ENCODE measurements at regions of chr7 and their contacts with region 1.

Region 1: DNA sequence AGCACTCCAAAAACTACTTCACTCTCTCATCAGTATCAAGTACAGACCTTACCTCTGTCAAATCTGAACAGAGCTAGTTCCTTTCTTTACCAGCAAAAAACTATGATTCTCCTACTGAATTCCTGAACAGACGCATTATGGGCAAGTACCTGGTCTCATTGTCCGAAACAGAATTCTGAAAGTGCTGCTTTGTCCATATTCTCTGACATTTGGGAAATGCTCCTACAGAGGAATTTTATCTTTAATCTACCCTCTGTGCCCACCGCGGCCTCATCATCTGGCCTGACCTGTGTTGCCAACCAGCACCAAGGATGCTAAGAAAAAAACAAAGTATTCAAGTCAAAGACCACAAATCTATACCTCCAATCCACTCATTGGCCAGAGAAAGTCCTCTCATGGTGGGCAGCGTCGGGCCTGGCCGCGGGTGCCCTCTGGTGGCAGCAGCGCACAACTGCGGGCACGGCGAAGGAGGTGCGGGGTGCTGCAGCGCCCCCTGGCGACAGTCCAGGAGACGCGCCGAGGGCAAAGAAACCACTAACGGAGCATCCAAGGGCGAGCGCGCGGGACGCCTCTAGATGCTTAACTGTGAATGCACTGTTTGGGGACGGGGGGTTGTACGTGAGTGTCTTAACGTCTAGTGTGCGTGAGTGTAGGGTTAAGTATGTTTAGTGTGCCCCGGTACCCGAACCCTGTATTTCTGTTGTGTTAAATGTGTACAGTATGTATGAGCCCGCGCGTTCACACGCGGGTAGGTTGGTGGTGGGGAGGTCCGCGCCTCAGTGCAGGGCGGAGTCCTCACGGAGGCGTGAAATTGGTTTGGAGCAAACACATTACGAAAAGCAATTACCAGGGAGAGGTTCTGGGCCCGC is 5.0 kb upstream of the GBX1 start:
- DNase-seq: peak; percentile 50
- ATAC-seq: peak; percentile 96
- H3K4me3 ChIP-seq: no peak overlapping the region
- H3K27ac ChIP-seq: no peak overlapping the region
- H3K4me1 ChIP-seq: no peaks in the 10 kb centered on the region
- H3K27me3 ChIP-seq: peaks cover 56% of the 10 kb centered on the region
- CTCF ChIP-seq: peak; percentile 100
- POLR2A ChIP-seq: no peak
- RAD21 ChIP-seq: peak; percentile 85

Region 2: GRCh38 chr7:150466477-150466876 is 706.0 kb before region 1 on chr7:
- CTCF ChIA-PET with region 1: no interaction called
- POLR2A ChIA-PET with region 1: no interaction called
- dilution Hi-C with region 1: no loop called
- in situ Hi-C with region 1: no loop called
- intact Hi-C with region 1: no loop called
- DNase-seq: no peak
- ATAC-seq: no peak
- H3K4me3 ChIP-seq: no peak overlapping the region
- H3K27ac ChIP-seq: no peak overlapping the region
- H3K4me1 ChIP-seq: no peaks in the 10 kb centered on the region
- H3K27me3 ChIP-seq: no peaks in the 10 kb centered on the region
- CTCF ChIP-seq: no peak
- POLR2A ChIP-seq: no peak
- RAD21 ChIP-seq: no peak

Region 3: DNA sequence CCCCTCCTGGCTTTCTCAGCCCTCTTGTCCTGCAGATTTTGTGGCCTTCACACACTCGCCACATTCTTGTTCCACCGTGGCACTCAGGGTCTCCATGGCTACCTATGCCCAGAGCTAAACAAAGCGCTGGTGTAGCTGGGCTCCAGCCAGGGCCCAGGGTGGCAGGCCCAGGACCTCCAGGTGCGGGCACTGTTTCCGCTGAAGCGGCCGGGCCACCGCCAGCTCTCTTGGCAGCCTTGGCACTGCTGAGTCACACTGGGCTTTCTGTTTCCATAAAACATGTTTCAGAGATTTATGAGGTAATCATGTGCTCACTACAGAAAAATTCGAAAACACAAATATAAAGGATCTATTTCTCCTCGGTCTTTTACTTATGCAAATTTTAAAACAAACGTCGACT is 268.9 kb before region 1 on chr7:
- CTCF ChIA-PET with region 1: no interaction called
- POLR2A ChIA-PET with region 1: no interaction called
- dilution Hi-C with region 1: no loop called
- in situ Hi-C with region 1: no loop called
- intact Hi-C with region 1: loop called (anchors 5 kb)
- DNase-seq: peak; percentile 81
- ATAC-seq: peak; percentile 74
- H3K4me3 ChIP-seq: no peak overlapping the region
- H3K27ac ChIP-seq: peak overlapping the region; percentile 22; the same call in 1 of the 2 replicates
- H3K4me1 ChIP-seq: peaks cover 13% of the 10 kb centered on the region
- H3K27me3 ChIP-seq: no peaks in the 10 kb centered on the region
- CTCF ChIP-seq: no peak
- POLR2A ChIP-seq: no peak
- RAD21 ChIP-seq: no peak

Region 4: DNA sequence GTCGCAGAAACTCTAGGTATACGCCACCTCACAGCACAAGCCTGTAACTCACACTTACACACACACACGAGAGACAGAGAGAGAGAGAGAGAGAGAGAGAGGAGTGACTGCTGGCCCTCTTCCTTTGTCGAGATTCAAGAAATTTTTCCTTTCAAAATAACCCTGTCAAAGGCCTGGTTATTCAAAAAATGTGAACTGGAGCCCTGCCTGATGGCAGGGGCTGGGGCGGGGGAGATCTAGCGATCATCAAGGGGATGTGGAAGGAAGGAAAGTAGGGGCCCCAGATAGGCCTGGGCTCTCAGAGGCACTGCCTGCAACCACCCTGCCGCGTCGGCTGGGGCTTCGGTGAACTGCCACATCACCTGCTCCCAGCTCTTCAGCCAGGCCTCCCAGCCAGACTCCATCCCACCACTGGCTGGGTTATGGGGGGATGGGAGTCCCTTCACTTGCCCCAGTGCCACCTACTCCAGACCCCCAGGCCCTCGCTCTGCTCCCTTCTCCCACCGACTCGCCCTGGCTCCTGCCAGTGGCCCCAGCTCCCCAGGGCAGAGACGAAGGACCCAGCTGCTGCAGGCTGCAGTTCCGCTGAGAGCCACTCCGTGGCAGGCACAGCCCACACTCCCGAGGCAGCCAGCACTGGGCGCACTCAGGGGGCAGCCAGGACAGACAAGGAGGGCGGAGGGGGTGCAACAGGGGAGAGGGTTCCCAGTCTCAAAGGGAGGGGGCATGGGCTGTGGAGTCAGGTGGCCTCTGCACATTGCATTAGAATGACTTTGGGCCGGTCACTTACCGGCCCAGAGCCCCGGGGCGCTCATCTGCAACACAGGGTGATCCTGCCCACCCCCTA is 209.7 kb before region 1 on chr7:
- CTCF ChIA-PET with region 1: no interaction called
- POLR2A ChIA-PET with region 1: no interaction called
- dilution Hi-C with region 1: no loop called
- in situ Hi-C with region 1: no loop called
- intact Hi-C with region 1: loop called (anchors 2 kb)
- DNase-seq: peak; percentile 37
- ATAC-seq: peak; percentile 91
- H3K4me3 ChIP-seq: no peak overlapping the region
- H3K27ac ChIP-seq: peak overlapping the region; percentile 79
- H3K4me1 ChIP-seq: peaks cover 13% of the 10 kb centered on the region; the same call in 1 of the 2 replicates
- H3K27me3 ChIP-seq: no peaks in the 10 kb centered on the region; the same call in 1 of the 2 replicates
- CTCF ChIP-seq: peak; percentile 90
- POLR2A ChIP-seq: no peak
- RAD21 ChIP-seq: peak; percentile 90

Region 5: GRCh38 chr7:151123822-151124464 is 48.6 kb before region 1 on chr7:
- CTCF ChIA-PET with region 1: no interaction called
- POLR2A ChIA-PET with region 1: no interaction called
- dilution Hi-C with region 1: no loop called
- in situ Hi-C with region 1: loop called (anchors 5 kb)
- intact Hi-C with region 1: loop called (anchors 1 kb)
- DNase-seq: peak; percentile 75
- ATAC-seq: peak; percentile 96
- H3K4me3 ChIP-seq: no peak overlapping the region
- H3K27ac ChIP-seq: no peak overlapping the region
- H3K4me1 ChIP-seq: no peaks in the 10 kb centered on the region
- H3K27me3 ChIP-seq: no peaks in the 10 kb centered on the region
- CTCF ChIP-seq: peak; percentile 98
- POLR2A ChIP-seq: no peak
- RAD21 ChIP-seq: peak; percentile 86

Region 6: DNA sequence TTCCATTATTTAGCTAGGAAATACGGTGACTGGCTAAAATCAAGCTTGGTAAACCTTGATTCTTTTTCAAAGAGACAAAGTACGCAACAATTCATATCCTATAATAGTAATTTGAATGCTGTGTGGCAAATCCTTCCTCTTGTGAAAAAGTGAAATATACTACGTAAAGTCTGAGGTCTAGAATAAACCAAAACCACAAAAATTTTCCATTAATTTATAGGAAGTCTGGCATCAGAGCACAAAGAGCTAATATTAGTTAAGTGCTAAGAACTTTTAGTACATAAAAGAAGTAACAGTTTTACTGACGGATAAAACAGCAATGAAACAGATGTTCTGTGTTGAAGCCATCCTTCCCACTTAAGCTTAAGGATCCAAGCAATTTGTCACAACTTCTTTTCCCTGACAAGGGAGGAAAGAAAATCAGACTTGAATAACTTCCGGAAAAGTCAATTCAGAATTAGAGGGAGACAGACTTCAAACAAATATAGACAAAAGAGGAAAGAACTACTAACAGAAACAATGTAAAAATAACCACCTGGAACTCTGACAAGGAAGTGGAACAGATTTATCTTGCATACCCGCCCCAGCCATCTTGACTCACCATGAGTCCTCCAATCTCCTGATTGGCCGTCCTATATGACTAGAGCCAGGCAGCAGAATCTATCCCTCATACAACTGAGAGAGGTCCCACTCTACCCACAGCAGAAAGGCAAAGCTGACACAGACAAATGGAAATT is 312.6 kb after region 1 on chr7:
- CTCF ChIA-PET with region 1: no interaction called
- POLR2A ChIA-PET with region 1: no interaction called
- dilution Hi-C with region 1: no loop called
- in situ Hi-C with region 1: no loop called
- intact Hi-C with region 1: no loop called
- DNase-seq: peak; percentile 88
- ATAC-seq: peak; percentile 79
- H3K4me3 ChIP-seq: no peak overlapping the region
- H3K27ac ChIP-seq: no peak overlapping the region
- H3K4me1 ChIP-seq: peaks cover 18% of the 10 kb centered on the region
- H3K27me3 ChIP-seq: no peaks in the 10 kb centered on the region
- CTCF ChIP-seq: no peak
- POLR2A ChIP-seq: no peak
- RAD21 ChIP-seq: no peak